Tibial artery (tissue), 4 donors: ENCODE measurements at regions of chr22 and their contacts with region 1.

Region 1: DNA sequence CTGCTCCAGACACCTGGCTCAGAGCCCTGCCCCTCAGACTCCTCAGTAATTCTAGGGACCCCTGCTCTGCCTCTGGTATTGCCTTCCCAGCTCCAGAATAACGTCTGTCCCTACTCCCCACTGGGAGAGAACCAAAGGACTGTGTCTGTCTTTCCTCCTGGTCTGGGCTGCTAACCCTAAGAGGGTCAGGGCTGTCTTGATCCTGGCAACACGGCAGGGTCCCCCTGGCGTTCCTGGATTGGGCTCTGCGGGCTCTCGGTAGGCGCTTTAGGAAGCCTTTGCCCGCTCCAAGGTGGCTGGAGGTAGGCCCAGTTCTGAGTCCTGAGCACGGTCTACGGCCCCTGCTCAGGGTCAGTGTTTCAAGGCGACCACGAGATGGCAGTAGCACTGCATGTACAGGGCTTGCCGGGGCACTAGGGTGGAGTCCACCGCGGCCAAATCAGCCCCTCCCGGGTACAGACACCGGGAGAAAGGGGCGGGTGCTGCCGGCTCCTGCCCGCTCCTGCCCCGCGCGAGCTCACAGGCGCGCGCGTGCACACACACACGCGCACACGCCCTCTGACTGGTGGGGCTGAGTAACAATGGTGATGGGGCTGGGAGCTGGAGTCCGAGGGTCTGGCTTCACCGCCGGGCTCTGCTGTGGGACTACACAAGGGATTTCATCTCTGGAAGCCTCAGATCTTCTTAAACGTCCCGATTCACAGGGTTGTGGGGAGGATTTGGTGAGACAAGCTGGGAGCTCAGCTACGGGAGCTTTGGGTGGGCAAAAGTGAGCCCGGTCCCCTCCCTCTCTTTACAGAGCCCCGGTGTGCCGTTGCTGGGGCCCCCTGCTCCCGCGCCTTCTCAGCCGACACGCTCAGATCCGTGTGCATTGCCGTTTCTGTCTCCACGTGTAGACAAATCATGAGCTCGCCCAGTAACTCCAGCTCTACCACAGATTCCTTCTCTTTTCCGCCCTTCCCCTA is 30.1 kb upstream of the HMOX1 start:
- DNase-seq: peak; percentile 91 to 96
- H3K4me3 ChIP-seq: peak overlapping the region; percentile 48 to 52
- H3K27ac ChIP-seq: peak overlapping the region; percentile 66 to 76
- H3K4me1 ChIP-seq: peaks cover 0 to 38% (median 21%) of the 10 kb centered on the region in 4 donors
- H3K27me3 ChIP-seq: peaks cover 0 to 4% of the 10 kb centered on the region in 2 donors
- CTCF ChIP-seq: peak; percentile 92 to 97

Region 2: GRCh38 chr22:35409783-35410662 is 59.2 kb after region 1 on chr22:
- intact Hi-C with region 1: loop called (anchors 10 kb)
- DNase-seq: no peak
- H3K4me3 ChIP-seq: no peak overlapping the region
- H3K27ac ChIP-seq: no peak overlapping the region
- H3K4me1 ChIP-seq: no peaks in the 10 kb centered on the region
- H3K27me3 ChIP-seq: no peaks in the 10 kb centered on the region
- CTCF ChIP-seq: no peak